Gastrocnemius medialis (tissue), 4 donors: ENCODE measurements at regions of chr22 and their contacts with region 1.

Region 1: GRCh38 chr22:26321469-26321913 is 107.6 kb upstream of the ASPHD2 start:
- DNase-seq: peak; percentile 64 to 77
- ATAC-seq: peak; percentile 80 to 91
- H3K4me3 ChIP-seq: no peak overlapping the region
- H3K27ac ChIP-seq: peak overlapping the region; percentile 78 to 84 (median 80)
- H3K4me1 ChIP-seq: peaks cover 20 to 26% of the 10 kb centered on the region in 2 donors
- H3K27me3 ChIP-seq: no peaks in the 10 kb centered on the region
- CTCF ChIP-seq: no peak
- POLR2A ChIP-seq: no peak

Region 2: DNA sequence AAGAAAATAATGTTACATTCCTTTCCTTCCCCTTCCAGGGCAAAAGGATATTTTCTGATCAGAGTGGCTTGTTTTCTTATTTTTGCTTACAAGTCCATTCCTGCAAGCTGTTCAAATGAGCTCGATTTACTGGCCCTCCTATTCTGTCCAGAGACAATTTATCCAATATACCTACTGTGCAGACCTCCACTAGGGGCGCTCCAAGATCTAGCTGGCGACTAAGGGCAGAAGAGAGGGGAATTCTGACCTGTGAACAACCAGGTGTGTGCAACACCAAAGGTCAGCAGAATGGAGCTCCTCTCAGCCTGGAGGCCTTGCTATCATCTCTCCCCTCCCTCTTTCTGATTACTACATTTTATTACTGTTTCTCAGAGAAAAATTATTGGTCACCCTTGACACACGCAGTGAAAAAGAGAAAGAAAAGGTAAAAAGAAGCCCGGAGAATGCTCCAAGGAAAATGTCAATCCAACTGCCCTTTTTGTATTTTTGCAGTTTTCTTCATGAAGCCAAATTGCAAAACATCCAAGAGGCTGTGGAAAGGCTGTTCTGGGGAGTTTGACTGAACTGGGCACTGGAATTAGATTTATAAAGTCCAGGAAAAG is 149.0 kb before region 1 on chr22:
- in situ Hi-C with region 1: loop called in 1 of 4 experiments (anchors 10 kb)
- intact Hi-C with region 1: no loop called
- DNase-seq: no peak
- ATAC-seq: peak; percentile 46 to 61
- H3K4me3 ChIP-seq: no peak overlapping the region
- H3K27ac ChIP-seq: no peak overlapping the region
- H3K4me1 ChIP-seq: peaks cover 0 to 9% of the 10 kb centered on the region in 2 donors
- H3K27me3 ChIP-seq: peaks cover 28 to 46% (median 32%) of the 10 kb centered on the region in 3 donors
- CTCF ChIP-seq: peak; percentile 32 to 71 (median 41)
- POLR2A ChIP-seq: no peak

Region 3: GRCh38 chr22:26236991-26237390 is 84.5 kb before region 1 on chr22:
- in situ Hi-C with region 1: no loop called
- intact Hi-C with region 1: loop called (anchors 5 kb)
- DNase-seq: no peak
- ATAC-seq: no peak
- H3K4me3 ChIP-seq: no peak overlapping the region
- H3K27ac ChIP-seq: no peak overlapping the region
- H3K4me1 ChIP-seq: peaks cover 27 to 28% of the 10 kb centered on the region in 2 donors
- H3K27me3 ChIP-seq: no peaks in the 10 kb centered on the region
- CTCF ChIP-seq: no peak
- POLR2A ChIP-seq: no peak

Region 4: GRCh38 chr22:26339755-26340154 is 18.3 kb after region 1 on chr22:
- in situ Hi-C with region 1: no loop called
- intact Hi-C with region 1: no loop called
- DNase-seq: peak in 1 of 2 donors; percentile 49
- ATAC-seq: peak in 1 of 2 donors; percentile 66
- H3K4me3 ChIP-seq: no peak overlapping the region
- H3K27ac ChIP-seq: no peak overlapping the region
- H3K4me1 ChIP-seq: no peaks in the 10 kb centered on the region
- H3K27me3 ChIP-seq: peaks cover 0 to 6% (median 2%) of the 10 kb centered on the region in 3 donors
- CTCF ChIP-seq: no peak
- POLR2A ChIP-seq: no peak